Gastrocnemius medialis (tissue), 4 donors: ENCODE measurements at regions of chr4 and their contacts with region 1.

Region 1: GRCh38 chr4:113761620-113762185 is at the start of gene CAMK2D:
- DNase-seq: peak; percentile 91 to 94
- ATAC-seq: peak; percentile 74 to 75
- H3K4me3 ChIP-seq: peak within 1 kb of the TSS; percentile 76 to 90 (median 86)
- H3K27ac ChIP-seq: peak within 1 kb of the TSS; percentile 93 to 99 (median 98)
- H3K4me1 ChIP-seq: peaks cover 29 to 31% of the 10 kb centered on the region in 2 donors
- H3K27me3 ChIP-seq: no peaks in the 10 kb centered on the region
- CTCF ChIP-seq: peak; percentile 38 to 81 (median 60)
- POLR2A ChIP-seq: peak; percentile 60 to 77
- total RNA-seq, gene CAMK2D: 73.2 to 149 (median 119) TPM

Region 2: GRCh38 chr4:113404841-113405240 is 356.9 kb before region 1 on chr4:
- in situ Hi-C with region 1: loop called in 1 of 4 experiments (anchors 10 kb)
- intact Hi-C with region 1: no loop called
- DNase-seq: no peak
- ATAC-seq: no peak
- H3K4me3 ChIP-seq: no peak overlapping the region
- H3K27ac ChIP-seq: no peak overlapping the region
- H3K4me1 ChIP-seq: peaks cover 0 to 13% of the 10 kb centered on the region in 2 donors
- H3K27me3 ChIP-seq: no peaks in the 10 kb centered on the region
- CTCF ChIP-seq: no peak
- POLR2A ChIP-seq: no peak

Region 3: GRCh38 chr4:113445286-113445685 is 316.4 kb before region 1 on chr4:
- in situ Hi-C with region 1: no loop called
- intact Hi-C with region 1: loop called (anchors 5 kb)
- DNase-seq: peak; percentile 63 to 69
- ATAC-seq: peak; percentile 86 to 87
- H3K4me3 ChIP-seq: no peak overlapping the region
- H3K27ac ChIP-seq: peak overlapping the region; percentile 55 to 62 (median 56)
- H3K4me1 ChIP-seq: peaks cover 20 to 51% of the 10 kb centered on the region in 2 donors
- H3K27me3 ChIP-seq: no peaks in the 10 kb centered on the region
- CTCF ChIP-seq: no peak
- POLR2A ChIP-seq: no peak

Region 4: DNA sequence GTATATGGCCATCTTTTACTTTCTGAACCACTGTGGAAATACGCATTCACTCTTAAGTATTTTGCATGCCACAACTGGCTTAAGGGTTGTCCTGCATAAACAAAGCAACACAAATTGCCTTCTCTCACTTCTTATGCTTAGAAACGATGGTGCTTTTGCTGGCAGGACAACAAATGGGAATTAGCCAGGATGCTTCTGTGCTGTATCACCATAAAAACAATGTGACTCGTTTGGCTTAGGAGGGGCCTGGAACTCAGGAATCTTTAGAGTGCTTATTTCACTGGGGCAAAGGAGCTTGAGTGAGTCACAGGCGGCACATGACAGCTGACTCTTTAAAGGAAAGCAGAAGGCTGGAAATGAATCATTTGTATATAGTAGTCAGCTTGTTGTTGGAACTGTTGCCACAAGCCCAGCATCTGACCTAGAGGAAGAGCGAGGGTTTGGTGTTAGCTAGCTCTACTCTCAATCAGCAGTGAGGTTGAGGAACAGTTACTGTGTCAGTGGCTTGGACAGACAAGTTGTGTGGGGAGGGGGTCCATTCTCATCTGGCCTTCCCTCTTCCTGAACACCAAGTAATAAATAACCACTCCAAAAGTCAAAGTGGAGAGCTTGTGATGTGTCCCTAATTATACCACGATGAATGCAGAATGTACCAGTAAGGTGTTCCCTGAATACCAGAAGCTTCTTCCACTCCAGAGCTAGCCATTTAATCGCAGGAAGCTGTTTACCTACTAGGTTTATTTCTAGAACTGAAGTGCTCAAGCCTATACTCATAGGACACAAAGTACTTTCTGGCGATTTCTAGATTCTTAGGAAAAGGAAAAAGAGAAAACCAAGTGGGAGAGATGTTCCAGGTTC is 293.3 kb before region 1 on chr4:
- in situ Hi-C with region 1: no loop called
- intact Hi-C with region 1: loop called (anchors 5 kb)
- DNase-seq: peak; percentile 95
- ATAC-seq: peak; percentile 91 to 92
- H3K4me3 ChIP-seq: peak overlapping the region; percentile 4 to 40 (median 28)
- H3K27ac ChIP-seq: peak overlapping the region; percentile 86 to 96 (median 94)
- H3K4me1 ChIP-seq: peaks cover 39 to 57% of the 10 kb centered on the region in 2 donors
- H3K27me3 ChIP-seq: no peaks in the 10 kb centered on the region
- CTCF ChIP-seq: no peak
- POLR2A ChIP-seq: peak; percentile 57 to 85

Region 5: GRCh38 chr4:113636438-113636818 is 125.3 kb before region 1 on chr4:
- in situ Hi-C with region 1: no loop called
- intact Hi-C with region 1: loop called (anchors 5 kb)
- DNase-seq: no peak
- ATAC-seq: peak in 1 of 2 donors; percentile 47
- H3K4me3 ChIP-seq: no peak overlapping the region
- H3K27ac ChIP-seq: peak overlapping the region; percentile 30 to 62 (median 51)
- H3K4me1 ChIP-seq: peaks cover 58 to 79% of the 10 kb centered on the region in 2 donors
- H3K27me3 ChIP-seq: no peaks in the 10 kb centered on the region
- CTCF ChIP-seq: no peak
- POLR2A ChIP-seq: no peak

Region 6: DNA sequence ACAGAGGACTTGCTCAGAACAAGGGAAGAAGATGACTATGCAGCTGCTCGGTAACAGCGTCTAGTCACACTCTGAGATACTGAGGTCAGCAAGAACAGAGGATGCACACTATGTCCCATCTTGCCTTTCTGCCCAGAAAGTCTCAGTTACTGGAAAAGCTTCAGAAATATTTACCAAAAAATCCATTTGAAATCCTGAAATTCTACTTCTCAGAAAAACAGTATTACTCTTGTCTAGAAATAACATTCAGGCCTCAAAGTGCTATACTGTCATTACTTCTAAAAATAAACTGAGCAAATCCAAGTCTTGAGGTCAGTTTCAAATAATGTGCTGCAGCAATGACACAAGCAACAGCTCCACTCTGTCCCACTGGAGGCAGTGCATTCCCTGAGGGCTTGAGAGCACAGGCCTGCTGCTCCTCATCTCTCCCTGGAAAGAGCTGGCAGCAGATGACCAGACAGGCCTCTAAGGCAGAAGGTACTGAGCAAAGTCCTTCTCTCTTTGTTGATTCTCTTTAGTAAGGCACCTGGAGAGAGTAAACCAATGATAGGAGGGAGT is 77.1 kb before region 1 on chr4:
- in situ Hi-C with region 1: no loop called
- intact Hi-C with region 1: loop called (anchors 2 kb)
- DNase-seq: peak; percentile 61 to 88
- ATAC-seq: peak; percentile 97 to 98
- H3K4me3 ChIP-seq: no peak overlapping the region
- H3K27ac ChIP-seq: peak overlapping the region; percentile 75 to 80 (median 78)
- H3K4me1 ChIP-seq: peaks cover 39 to 50% of the 10 kb centered on the region in 2 donors
- H3K27me3 ChIP-seq: no peaks in the 10 kb centered on the region
- CTCF ChIP-seq: peak; percentile 28 to 73 (median 58)
- POLR2A ChIP-seq: peak in 1 of 2 donors; percentile 20

Region 7: GRCh38 chr4:113708250-113708649 is 53.5 kb before region 1 on chr4:
- in situ Hi-C with region 1: no loop called
- intact Hi-C with region 1: loop called (anchors 1 kb)
- DNase-seq: peak in 1 of 2 donors; percentile 28
- ATAC-seq: peak; percentile 36 to 63
- H3K4me3 ChIP-seq: no peak overlapping the region
- H3K27ac ChIP-seq: peak overlapping the region; percentile 74 to 85 (median 81)
- H3K4me1 ChIP-seq: peaks cover 43 to 67% of the 10 kb centered on the region in 2 donors
- H3K27me3 ChIP-seq: no peaks in the 10 kb centered on the region
- CTCF ChIP-seq: no peak
- POLR2A ChIP-seq: no peak